ENCODE measurements at regions of chr4 and their contacts with region 1.

Region 1: DNA sequence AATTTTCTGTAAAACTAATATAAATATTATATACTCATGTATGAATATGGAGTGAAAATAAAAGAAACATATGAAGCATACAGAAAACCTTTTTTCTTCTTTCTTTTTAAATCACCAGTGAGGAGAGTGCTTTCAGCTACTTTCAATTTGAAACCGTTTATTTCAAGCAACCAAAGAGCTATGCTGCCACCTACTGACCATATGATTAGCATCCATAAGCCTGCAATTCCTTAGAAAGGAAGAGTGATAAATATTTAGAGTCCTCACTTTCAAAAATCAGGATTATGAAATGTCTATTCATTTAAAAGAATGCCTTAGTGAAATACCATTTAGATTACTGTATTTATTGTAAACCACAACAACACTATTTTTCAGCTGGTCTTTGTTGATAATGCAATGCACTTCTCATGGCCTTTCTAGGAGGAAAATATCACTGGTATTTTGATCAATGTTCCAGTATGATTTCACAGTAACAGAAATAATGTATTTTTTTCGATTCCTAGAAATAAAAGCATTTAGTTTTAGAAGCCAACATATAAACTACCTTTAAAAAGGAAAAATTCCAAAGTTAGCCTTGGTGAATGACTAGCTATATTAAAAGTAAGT is 667.6 kb downstream of the PCDH18 start:
- DNase-seq: peak in 1 of 10 donors; percentile 22
- H3K4me3 ChIP-seq: peak overlapping the region in 19 of 59 donors; percentile 3 to 40 (median 22)
- H3K27ac ChIP-seq: no peak overlapping the region
- H3K27me3 ChIP-seq: no peaks in the 10 kb centered on the region
- CTCF ChIP-seq: peak; percentile 74 to 97 (median 85)

Region 2: GRCh38 chr4:136713140-136713539 is 151.5 kb before region 1 on chr4:
- intact Hi-C with region 1: loop called in 1 of 2 experiments (anchors 5 kb)
- DNase-seq: peak in 1 of 10 donors; percentile 19
- H3K4me3 ChIP-seq: peak overlapping the region in 39 of 59 donors; percentile 2 to 55 (median 28)
- H3K27ac ChIP-seq: peak overlapping the region in 1 of 59 donors; percentile 13
- H3K27me3 ChIP-seq: no peaks in the 10 kb centered on the region
- CTCF ChIP-seq: peak in 46 of 56 donors; percentile 8 to 67 (median 38)